ENCODE measurements at regions of chr10 and their contacts with region 1.

Region 1: GRCh38 chr10:95693668-95694534 is at the start of gene TCTN3:
- DNase-seq: peak; percentile 95
- H3K4me3 ChIP-seq: peak within 1 kb of the TSS; percentile 85 to 98
- H3K27ac ChIP-seq: peak within 1 kb of the TSS; percentile 64 to 72; a peak in 2 of 4 replicates
- H3K4me1 ChIP-seq: peaks cover 5 to 7% of the 10 kb centered on the region in 2 experiments; a peak in 2 of 4 replicates
- H3K27me3 ChIP-seq: no peaks in the 10 kb centered on the region; the same call in 1 of the 2 replicates
- CTCF ChIP-seq: peak; percentile 98
- EP300 ChIP-seq: peak in 1 of 2 experiments; percentile 14; a peak in 1 of 4 replicates
- RAD21 ChIP-seq: peak; percentile 92
- polyA plus RNA-seq, gene TCTN3: 39.5 and 59.4 TPM in 2 replicates

Region 2: GRCh38 chr10:95459446-95460045 is 234.4 kb before region 1 on chr10:
- CTCF ChIA-PET with region 1: no interaction called
- POLR2A ChIA-PET with region 1: no interaction called
- DNase-seq: no peak
- H3K4me3 ChIP-seq: no peak overlapping the region
- H3K27ac ChIP-seq: no peak overlapping the region
- H3K4me1 ChIP-seq: no peaks in the 10 kb centered on the region; a peak in 1 of 4 replicates
- H3K27me3 ChIP-seq: 0 out of 2 replicates have a peak, but pooled peaks cover 4% of the 10 kb centered on the region
- CTCF ChIP-seq: no peak
- EP300 ChIP-seq: no peak
- RAD21 ChIP-seq: no peak

Region 3: DNA sequence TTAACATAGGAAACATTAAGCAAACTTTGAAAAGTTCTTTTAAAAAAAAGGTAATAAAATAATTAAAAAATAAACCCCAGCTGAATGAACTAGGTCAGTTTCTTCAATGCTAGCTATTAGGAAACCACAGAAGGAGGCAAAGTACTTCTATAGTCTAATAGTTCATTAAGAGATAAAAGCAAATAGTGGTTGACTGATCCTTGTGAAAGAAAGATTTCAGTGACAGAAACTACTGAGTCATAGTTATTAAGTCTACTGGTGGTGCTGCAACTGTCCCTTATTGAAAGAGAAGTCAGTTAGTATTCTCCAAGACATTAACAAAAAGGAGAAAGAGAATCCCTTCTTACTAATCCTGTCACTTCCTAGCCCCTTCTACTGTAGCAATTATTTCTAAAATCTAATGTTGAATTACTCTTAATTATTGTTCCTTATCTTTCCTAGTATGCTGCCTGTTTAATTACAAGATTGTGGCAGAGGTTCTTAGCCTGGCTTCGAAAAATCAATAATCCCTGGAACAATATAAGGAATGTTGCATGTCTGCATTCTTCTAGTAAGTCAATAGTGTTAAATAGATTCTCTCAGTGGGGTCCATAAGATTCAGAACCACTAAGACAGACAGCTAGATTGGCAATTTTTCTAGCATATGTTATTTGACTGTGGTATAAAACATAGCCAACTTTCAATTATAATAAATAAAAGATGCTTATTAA is 18.3 kb before region 1 on chr10:
- CTCF ChIA-PET with region 1: interaction called, 27 read pairs
- POLR2A ChIA-PET with region 1: no interaction called
- DNase-seq: no peak
- H3K4me3 ChIP-seq: no peak overlapping the region
- H3K27ac ChIP-seq: no peak overlapping the region
- H3K4me1 ChIP-seq: no peaks in the 10 kb centered on the region
- H3K27me3 ChIP-seq: no peaks in the 10 kb centered on the region
- CTCF ChIP-seq: no peak
- EP300 ChIP-seq: no peak
- RAD21 ChIP-seq: no peak

Region 4: DNA sequence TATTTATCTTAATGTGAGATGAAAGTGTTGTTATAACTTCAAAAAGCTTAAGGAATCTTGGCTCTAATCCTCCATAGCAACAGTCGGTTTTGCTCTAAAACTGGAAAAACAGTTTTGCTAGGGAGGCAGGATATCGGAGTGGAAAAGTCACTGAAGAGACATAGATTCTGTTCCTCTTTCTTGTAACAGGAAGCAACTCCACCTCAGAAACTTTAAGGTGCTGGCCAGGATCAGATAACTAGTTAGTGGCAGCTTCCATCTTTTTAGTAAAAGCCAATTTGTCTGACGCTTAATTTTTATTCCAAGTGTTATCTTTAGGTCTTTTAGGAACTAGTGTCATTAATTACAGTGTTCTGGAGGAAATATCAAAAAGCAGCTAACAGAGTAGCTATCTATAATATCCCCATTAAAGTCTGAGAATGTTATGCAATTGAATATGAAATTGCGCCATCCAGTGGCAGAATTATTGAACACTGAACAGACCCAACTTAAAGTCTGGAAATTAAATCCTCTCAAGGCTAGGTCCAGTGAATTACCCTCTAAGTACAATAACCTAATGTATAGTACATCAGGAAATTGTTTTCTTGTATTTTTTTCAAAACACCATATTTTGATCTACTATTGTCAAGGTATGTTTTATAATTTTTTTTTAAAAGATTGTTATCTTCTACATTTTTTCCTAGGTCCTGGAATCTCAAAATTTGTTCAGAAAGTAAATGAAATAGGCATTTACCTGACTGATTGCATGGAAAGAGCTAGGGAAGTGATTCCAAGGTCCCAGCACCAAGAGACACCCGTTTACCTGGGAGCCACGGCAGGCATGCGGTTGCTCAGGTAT is 148.0 kb after region 1 on chr10:
- CTCF ChIA-PET with region 1: interaction called, 50 read pairs
- POLR2A ChIA-PET with region 1: interaction called, 3 read pairs
- DNase-seq: peak; percentile 44
- H3K4me3 ChIP-seq: no peak overlapping the region; a peak in 1 of 4 replicates
- H3K27ac ChIP-seq: 0 out of 4 replicates have a peak overlapping the region, but pooled peaks of 1 of the 2 experiments have one; percentile 2
- H3K4me1 ChIP-seq: peaks cover 0 to 4% of the 10 kb centered on the region in 2 experiments; a peak in 1 of 4 replicates
- H3K27me3 ChIP-seq: no peaks in the 10 kb centered on the region
- CTCF ChIP-seq: peak; percentile 83
- EP300 ChIP-seq: no peak
- RAD21 ChIP-seq: peak; percentile 67

Region 5: GRCh38 chr10:95864906-95865813 is 171.3 kb after region 1 on chr10:
- CTCF ChIA-PET with region 1: interaction called, 16 read pairs
- POLR2A ChIA-PET with region 1: no interaction called
- DNase-seq: peak; percentile 35
- H3K4me3 ChIP-seq: no peak overlapping the region; a peak in 1 of 4 replicates
- H3K27ac ChIP-seq: no peak overlapping the region
- H3K4me1 ChIP-seq: peaks cover 0 to 9% of the 10 kb centered on the region in 2 experiments; a peak in 2 of 4 replicates
- H3K27me3 ChIP-seq: no peaks in the 10 kb centered on the region
- CTCF ChIP-seq: peak; percentile 62
- EP300 ChIP-seq: no peak
- RAD21 ChIP-seq: peak; percentile 66